Activated CD4-positive, alpha-beta T cell treated with anti-CD3 and anti-CD28 coated beads, Interleukin-2, amount 10 ng/mL, durations not matched to agents 7 days and 5 days (primary cell): ENCODE measurements at regions of chr2 and their contacts with region 1.

Region 1: DNA sequence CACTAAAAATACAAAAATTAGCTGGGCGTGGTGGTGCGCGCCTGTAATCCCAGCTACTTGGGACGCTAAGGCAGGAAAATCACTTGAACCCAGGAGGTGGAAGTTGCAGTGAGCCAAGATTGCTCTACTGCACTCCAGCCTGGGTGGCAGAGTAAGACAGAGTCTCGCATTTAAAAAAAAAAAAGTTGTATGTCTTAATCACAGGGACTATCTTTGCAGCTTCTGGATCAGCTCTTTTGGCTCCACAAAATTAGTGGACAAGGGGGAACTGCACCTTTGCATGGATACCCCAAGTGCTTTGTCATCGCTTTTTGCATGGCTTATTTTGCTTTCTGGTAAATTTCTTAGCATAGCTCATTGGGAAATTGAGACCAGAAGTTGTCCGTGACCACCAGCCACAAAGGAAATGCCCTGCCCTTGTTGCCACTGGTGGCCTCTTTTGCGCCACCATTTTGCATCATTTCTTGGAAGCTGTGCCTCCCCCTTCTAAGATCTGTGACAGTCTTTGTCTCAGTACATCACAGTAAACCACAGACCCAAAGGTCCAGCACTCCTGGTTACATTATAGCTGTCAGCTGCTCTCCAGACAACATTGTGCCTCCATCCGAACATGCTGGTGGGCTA is 43.9 kb upstream of the PCBP1 start:
- DNase-seq: peak; percentile 71
- H3K4me3 Mint-ChIP-seq: peak overlapping the region; percentile 45
- H3K27ac Mint-ChIP-seq: peak overlapping the region; percentile 90
- H3K4me1 Mint-ChIP-seq: peaks cover 68% of the 10 kb centered on the region
- H3K27me3 Mint-ChIP-seq: no peaks in the 10 kb centered on the region

Region 2: DNA sequence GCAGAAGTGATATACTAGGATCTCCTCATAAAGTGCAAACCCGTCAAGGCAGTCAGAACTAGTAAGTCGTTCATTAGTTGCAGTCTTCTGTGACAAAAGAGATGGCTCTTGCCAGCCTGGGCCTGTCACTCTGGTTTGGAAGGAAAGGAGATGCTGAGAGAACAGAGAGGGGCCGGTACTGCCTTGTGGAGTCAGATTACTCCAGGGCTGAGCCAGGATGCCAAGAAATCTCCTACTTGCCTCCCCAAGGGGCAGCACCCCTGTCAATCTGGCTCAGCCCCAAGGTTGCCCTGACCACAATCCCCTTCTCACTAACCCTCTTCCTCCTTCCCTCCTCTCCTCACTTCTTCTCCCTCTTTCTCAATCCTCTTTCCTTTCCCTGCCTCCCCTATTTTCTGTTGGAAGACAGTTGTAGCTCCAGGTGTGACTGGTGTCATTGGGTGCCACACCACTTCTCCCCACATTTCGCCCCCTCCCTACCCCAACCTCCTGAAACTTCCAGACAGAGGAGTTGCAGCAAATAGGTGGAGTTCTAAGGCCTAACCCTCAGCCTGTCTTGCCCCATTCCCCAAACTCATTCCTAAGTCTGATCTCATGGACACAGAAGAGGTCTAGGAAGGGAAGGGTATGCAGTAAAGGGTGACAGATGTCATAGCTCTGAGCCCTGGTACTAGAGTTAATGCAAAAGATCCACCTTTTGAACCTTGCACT is 18.9 kb before region 1 on chr2:
- CTCF ChIA-PET with region 1: interaction called, 10 read pairs
- POLR2A ChIA-PET with region 1: no interaction called
- DNase-seq: no peak
- H3K4me3 Mint-ChIP-seq: no peak overlapping the region
- H3K27ac Mint-ChIP-seq: peak overlapping the region; percentile 68
- H3K4me1 Mint-ChIP-seq: peaks cover 6% of the 10 kb centered on the region
- H3K27me3 Mint-ChIP-seq: no peaks in the 10 kb centered on the region

Region 3: DNA sequence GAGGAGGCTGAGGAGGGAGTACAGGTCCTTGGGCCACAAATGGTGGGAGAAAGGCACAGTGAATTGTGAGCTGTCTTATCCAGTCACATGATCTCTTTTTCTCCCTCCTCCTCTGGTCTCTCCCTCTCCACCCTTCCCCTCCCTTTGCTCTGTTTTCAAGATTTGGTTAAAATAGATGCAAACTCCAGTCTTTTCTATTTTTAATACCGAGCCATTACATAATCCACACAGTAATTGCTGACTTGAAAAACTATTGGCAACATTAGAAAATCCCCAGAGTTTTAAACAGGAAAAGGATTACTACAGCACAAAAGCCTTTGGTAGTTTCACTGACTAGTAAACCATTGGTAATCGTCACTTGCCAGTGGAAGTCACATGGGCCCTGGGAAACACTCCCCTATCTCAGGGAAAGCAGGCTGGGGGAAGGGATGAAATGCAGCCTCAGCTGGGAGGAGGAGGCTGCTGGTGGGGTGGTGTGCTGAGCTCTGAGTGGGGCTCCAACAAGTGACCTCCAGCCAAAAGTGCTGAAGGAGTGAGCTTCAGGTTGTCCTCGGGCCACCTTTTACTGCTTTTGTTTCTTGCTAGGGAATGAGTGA is 13.5 kb before region 1 on chr2:
- CTCF ChIA-PET with region 1: interaction called, 10 read pairs
- POLR2A ChIA-PET with region 1: no interaction called
- DNase-seq: no peak
- H3K4me3 Mint-ChIP-seq: no peak overlapping the region
- H3K27ac Mint-ChIP-seq: no peak overlapping the region
- H3K4me1 Mint-ChIP-seq: peaks cover 13% of the 10 kb centered on the region
- H3K27me3 Mint-ChIP-seq: no peaks in the 10 kb centered on the region

Region 4: DNA sequence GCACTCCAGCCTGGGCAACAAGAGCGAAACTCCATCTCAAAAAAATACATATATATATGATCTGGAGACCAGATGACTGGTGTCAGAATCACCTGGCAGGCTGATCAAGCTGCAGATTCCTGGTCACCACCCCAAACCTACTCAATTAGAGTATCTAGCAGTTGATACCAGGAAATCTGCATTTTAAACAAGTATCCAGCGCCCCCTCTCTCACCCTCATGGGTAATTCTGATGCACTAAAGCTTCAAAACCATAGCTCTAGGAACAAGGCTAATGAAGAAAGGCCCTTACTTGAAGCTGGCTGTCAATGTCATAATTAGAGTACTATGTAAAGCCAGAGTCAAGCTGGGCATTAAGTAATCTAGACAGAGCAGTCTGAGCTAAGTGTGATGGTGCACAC is 18.9 kb after region 1 on chr2:
- CTCF ChIA-PET with region 1: interaction called, 20 read pairs
- POLR2A ChIA-PET with region 1: no interaction called
- DNase-seq: no peak
- H3K4me3 Mint-ChIP-seq: no peak overlapping the region
- H3K27ac Mint-ChIP-seq: no peak overlapping the region
- H3K4me1 Mint-ChIP-seq: peaks cover 14% of the 10 kb centered on the region
- H3K27me3 Mint-ChIP-seq: no peaks in the 10 kb centered on the region

Region 5: DNA sequence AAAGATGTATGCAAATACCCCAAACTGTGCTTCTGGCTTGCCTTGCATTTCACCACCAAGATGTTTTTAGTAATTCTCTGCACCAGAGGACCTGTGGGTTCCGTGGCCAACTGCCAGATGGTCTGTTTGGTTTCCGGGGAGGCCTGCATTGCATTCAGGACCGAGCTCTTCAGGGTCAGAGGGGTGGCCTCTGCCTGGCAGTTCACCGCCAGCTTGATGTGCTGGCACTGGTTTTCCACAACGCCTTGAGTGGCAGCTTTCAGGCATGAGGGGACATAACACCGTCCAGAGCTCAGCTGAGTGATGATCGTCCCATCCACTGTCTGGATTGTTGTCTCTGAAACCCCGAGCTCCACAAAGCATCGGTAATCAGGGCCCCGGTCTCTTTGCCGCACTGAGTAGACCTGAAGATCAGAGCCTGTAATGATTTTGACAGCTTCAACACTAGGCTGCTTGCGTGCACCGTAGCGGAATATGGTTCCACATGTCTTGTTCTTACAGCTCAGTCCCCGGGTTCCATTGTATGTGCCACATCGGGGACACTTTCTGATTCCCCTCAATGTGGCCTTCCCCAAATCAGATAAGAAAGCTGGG is 138.1 kb after region 1 on chr2:
- CTCF ChIA-PET with region 1: no interaction called
- POLR2A ChIA-PET with region 1: no interaction called
- DNase-seq: no peak
- H3K4me3 Mint-ChIP-seq: no peak overlapping the region
- H3K27ac Mint-ChIP-seq: peak overlapping the region; percentile 41
- H3K4me1 Mint-ChIP-seq: peaks cover 7% of the 10 kb centered on the region
- H3K27me3 Mint-ChIP-seq: no peaks in the 10 kb centered on the region